Stomach (tissue), 19 donors: ENCODE measurements at regions of chr12 and their contacts with region 1.

Region 1: GRCh38 chr12:57844709-57845477 is 1.6 kb downstream of the CTDSP2 start:
- DNase-seq: peak; percentile 58 to 80
- H3K4me3 ChIP-seq: peak overlapping the region; percentile 80 to 97 (median 86)
- H3K27ac ChIP-seq: peak overlapping the region; percentile 98 to 100 (median 99)
- H3K4me1 ChIP-seq: peaks cover 46 to 62% (median 54%) of the 10 kb centered on the region in 4 donors
- H3K27me3 ChIP-seq: no peaks in the 10 kb centered on the region
- CTCF ChIP-seq: no peak
- EP300 ChIP-seq: no peak
- POLR2A ChIP-seq: no peak

Region 2: GRCh38 chr12:57782608-57783465 is 62.1 kb before region 1 on chr12 and contains the start of gene TSFM:
- intact Hi-C with region 1: no loop called
- DNase-seq: peak; percentile 96 to 98
- H3K4me3 ChIP-seq: peak within 1 kb of the TSS; percentile 76 to 99 (median 96)
- H3K27ac ChIP-seq: peak within 1 kb of the TSS; percentile 43 to 85 (median 77)
- H3K4me1 ChIP-seq: peaks cover 8 to 32% (median 20%) of the 10 kb centered on the region in 4 donors
- H3K27me3 ChIP-seq: no peaks in the 10 kb centered on the region
- CTCF ChIP-seq: peak in 6 of 7 experiments; percentile 86 to 99 (median 90)
- EP300 ChIP-seq: peak; percentile 36
- POLR2A ChIP-seq: peak in 1 of 4 donors; percentile 5
- total RNA-seq, gene TSFM: 2.3 to 13.8 (median 8.0) TPM

Region 3: GRCh38 chr12:57899010-57899662 is 54.2 kb after region 1 on chr12:
- intact Hi-C with region 1: loop called (anchors 5 kb)
- DNase-seq: peak; percentile 49 to 53
- H3K4me3 ChIP-seq: no peak overlapping the region
- H3K27ac ChIP-seq: peak overlapping the region; percentile 36 to 98 (median 97)
- H3K4me1 ChIP-seq: peaks cover 49 to 56% (median 54%) of the 10 kb centered on the region in 4 donors
- H3K27me3 ChIP-seq: no peaks in the 10 kb centered on the region
- CTCF ChIP-seq: no peak
- EP300 ChIP-seq: no peak
- POLR2A ChIP-seq: no peak